ENCODE measurements at regions of chr5 and their contacts with region 1.

Region 1: GRCh38 chr5:89457411-89458331 is 574.7 kb upstream of the MEF2C start:
- DNase-seq: peak; percentile 90
- ATAC-seq: peak; percentile 98
- H3K4me3 ChIP-seq: no peak overlapping the region
- H3K27ac ChIP-seq: peak overlapping the region; percentile 89
- H3K4me1 ChIP-seq: peaks cover 19% of the 10 kb centered on the region
- H3K27me3 ChIP-seq: no peaks in the 10 kb centered on the region
- CTCF ChIP-seq: no peak

Region 2: GRCh38 chr5:88761269-88761850 is 696.3 kb before region 1 on chr5:
- CTCF ChIA-PET with region 1: no interaction called
- POLR2A ChIA-PET with region 1: no interaction called
- intact Hi-C with region 1: no loop called
- DNase-seq: peak; percentile 45
- ATAC-seq: peak; percentile 51
- H3K4me3 ChIP-seq: no peak overlapping the region
- H3K27ac ChIP-seq: no peak overlapping the region
- H3K4me1 ChIP-seq: peaks cover 16% of the 10 kb centered on the region
- H3K27me3 ChIP-seq: no peaks in the 10 kb centered on the region
- CTCF ChIP-seq: no peak

Region 3: GRCh38 chr5:89377767-89378455 is 79.8 kb before region 1 on chr5:
- CTCF ChIA-PET with region 1: no interaction called
- POLR2A ChIA-PET with region 1: no interaction called
- intact Hi-C with region 1: loop called (anchors 1 kb)
- DNase-seq: peak; percentile 5
- ATAC-seq: no peak
- H3K4me3 ChIP-seq: no peak overlapping the region
- H3K27ac ChIP-seq: no peak overlapping the region
- H3K4me1 ChIP-seq: 0 out of 2 replicates have a peak, but pooled peaks cover 6% of the 10 kb centered on the region
- H3K27me3 ChIP-seq: no peaks in the 10 kb centered on the region
- CTCF ChIP-seq: no peak

Region 4: DNA sequence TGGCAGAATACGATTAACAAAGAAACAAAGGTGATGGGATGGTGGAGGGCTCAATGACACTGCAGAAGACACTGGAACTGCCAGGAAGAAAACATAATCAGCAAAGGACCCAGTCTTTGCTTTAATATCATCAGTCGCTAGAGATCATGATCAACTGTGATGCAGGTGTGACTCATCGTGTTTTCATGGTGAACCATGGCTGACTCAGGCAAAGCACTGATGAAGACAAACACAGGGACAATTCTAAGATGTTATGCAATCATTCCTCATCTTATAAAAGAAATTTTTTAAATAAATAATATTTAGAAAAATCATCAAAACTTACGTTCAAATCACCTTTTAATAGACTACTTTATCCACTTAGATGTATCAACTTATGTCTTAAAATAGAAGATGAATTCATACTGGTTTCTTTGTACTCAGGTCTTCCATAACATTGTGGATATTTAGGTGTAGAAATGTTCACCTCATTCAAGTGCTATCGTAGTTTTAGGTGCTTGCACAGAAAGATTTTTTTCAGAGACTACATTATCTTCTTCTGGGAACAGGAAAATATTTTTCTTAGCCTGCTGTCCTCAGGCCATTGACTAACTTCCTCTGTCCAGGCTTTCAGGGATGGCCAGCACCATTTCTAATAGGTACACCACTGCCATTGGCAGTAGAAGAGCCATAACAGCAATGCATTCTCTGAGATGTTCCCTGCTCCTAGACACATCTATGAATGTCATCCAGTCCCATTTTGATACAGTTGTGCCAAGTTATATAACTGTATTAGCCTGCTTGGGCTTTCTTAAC is 98.7 kb after region 1 on chr5:
- CTCF ChIA-PET with region 1: no interaction called
- POLR2A ChIA-PET with region 1: no interaction called
- intact Hi-C with region 1: loop called (anchors 5 kb)
- DNase-seq: peak; percentile 96
- ATAC-seq: peak; percentile 98
- H3K4me3 ChIP-seq: peak overlapping the region; percentile 6; the same call in 1 of the 2 replicates
- H3K27ac ChIP-seq: peak overlapping the region; percentile 86
- H3K4me1 ChIP-seq: peaks cover 20% of the 10 kb centered on the region
- H3K27me3 ChIP-seq: no peaks in the 10 kb centered on the region
- CTCF ChIP-seq: no peak

Region 5: GRCh38 chr5:89697581-89697980 is 239.9 kb after region 1 on chr5:
- CTCF ChIA-PET with region 1: no interaction called
- POLR2A ChIA-PET with region 1: no interaction called
- intact Hi-C with region 1: loop called (anchors 1 kb)
- DNase-seq: peak; percentile 70
- ATAC-seq: peak; percentile 90
- H3K4me3 ChIP-seq: no peak overlapping the region
- H3K27ac ChIP-seq: peak overlapping the region; percentile 73
- H3K4me1 ChIP-seq: peaks cover 16% of the 10 kb centered on the region
- H3K27me3 ChIP-seq: no peaks in the 10 kb centered on the region
- CTCF ChIP-seq: no peak

Region 6: GRCh38 chr5:89707891-89708290 is 250.2 kb after region 1 on chr5:
- CTCF ChIA-PET with region 1: no interaction called
- POLR2A ChIA-PET with region 1: no interaction called
- intact Hi-C with region 1: no loop called
- DNase-seq: no peak
- ATAC-seq: no peak
- H3K4me3 ChIP-seq: no peak overlapping the region
- H3K27ac ChIP-seq: no peak overlapping the region
- H3K4me1 ChIP-seq: peaks cover 6% of the 10 kb centered on the region
- H3K27me3 ChIP-seq: no peaks in the 10 kb centered on the region
- CTCF ChIP-seq: no peak

Measured in PC-3 (cell line).